ENCODE measurements at regions of chr10 and their contacts with region 1.

Region 1: GRCh38 chr10:43461950-43462349 is 25.0 kb downstream of the ZNF487 start:
- DNase-seq: peak; percentile 85
- ATAC-seq: peak; percentile 94
- H3K4me3 ChIP-seq: no peak overlapping the region
- H3K27ac ChIP-seq: no peak overlapping the region
- H3K4me1 ChIP-seq: no peaks in the 10 kb centered on the region
- H3K27me3 ChIP-seq: no peaks in the 10 kb centered on the region
- CTCF ChIP-seq: peak; percentile 76
- POLR2A ChIP-seq: no peak
- RAD21 ChIP-seq: peak; percentile 75

Region 2: GRCh38 chr10:42866115-42866995 is 595.6 kb before region 1 on chr10:
- CTCF ChIA-PET with region 1: no interaction called
- POLR2A ChIA-PET with region 1: no interaction called
- dilution Hi-C with region 1: no loop called
- in situ Hi-C with region 1: no loop called
- intact Hi-C with region 1: loop called (anchors 1 kb)
- DNase-seq: peak; percentile 64
- ATAC-seq: peak; percentile 100
- H3K4me3 ChIP-seq: peak overlapping the region; percentile 5; the same call in 1 of the 2 replicates
- H3K27ac ChIP-seq: no peak overlapping the region
- H3K4me1 ChIP-seq: no peaks in the 10 kb centered on the region
- H3K27me3 ChIP-seq: peaks cover 26% of the 10 kb centered on the region
- CTCF ChIP-seq: peak; percentile 74
- POLR2A ChIP-seq: no peak
- RAD21 ChIP-seq: peak; percentile 86

Region 3: DNA sequence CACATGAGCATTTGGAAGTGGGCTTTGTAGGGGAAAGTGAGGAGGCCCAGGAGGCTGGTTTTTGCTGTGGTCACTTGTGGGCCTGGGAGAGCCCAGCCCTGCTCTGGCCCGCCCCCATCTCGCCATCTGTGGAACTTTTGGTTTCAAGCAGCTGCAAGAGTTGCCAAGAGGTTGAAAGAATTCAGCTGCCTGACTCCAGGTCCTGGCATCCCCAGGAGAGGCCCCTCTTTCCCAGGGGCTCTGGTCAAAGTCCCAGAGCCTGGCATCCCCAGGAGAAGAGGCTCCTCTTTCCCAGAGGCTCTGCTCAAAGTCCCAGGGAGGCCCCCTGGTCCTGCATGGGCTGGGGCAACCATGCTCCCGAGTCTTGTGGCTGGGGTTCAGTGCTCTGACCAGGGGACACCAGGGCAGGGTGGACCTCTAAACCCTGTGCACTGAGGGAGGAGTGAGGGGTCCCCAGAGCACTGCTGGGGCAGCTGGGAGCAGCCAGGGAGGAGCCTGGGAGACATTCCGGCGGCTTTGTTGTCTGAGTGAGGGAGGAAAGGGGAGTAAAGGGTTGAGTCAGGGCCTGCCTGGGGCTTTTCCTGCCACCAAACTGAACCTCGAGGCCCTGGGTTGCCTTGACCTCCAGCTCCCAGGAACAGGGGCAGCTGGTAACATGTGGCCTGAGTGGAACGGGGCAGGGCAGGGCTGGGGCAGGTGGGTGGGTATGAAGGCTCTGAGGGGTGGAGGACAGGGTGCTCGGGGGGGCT is 351.4 kb before region 1 on chr10:
- CTCF ChIA-PET with region 1: no interaction called
- POLR2A ChIA-PET with region 1: no interaction called
- dilution Hi-C with region 1: no loop called
- in situ Hi-C with region 1: no loop called
- intact Hi-C with region 1: loop called (anchors 2 kb)
- DNase-seq: peak; percentile 57
- ATAC-seq: peak; percentile 61
- H3K4me3 ChIP-seq: no peak overlapping the region
- H3K27ac ChIP-seq: peak overlapping the region; percentile 36; the same call in 1 of the 2 replicates
- H3K4me1 ChIP-seq: peaks cover 10% of the 10 kb centered on the region
- H3K27me3 ChIP-seq: no peaks in the 10 kb centered on the region; the same call in 1 of the 2 replicates
- CTCF ChIP-seq: no peak
- POLR2A ChIP-seq: no peak
- RAD21 ChIP-seq: no peak

Region 4: DNA sequence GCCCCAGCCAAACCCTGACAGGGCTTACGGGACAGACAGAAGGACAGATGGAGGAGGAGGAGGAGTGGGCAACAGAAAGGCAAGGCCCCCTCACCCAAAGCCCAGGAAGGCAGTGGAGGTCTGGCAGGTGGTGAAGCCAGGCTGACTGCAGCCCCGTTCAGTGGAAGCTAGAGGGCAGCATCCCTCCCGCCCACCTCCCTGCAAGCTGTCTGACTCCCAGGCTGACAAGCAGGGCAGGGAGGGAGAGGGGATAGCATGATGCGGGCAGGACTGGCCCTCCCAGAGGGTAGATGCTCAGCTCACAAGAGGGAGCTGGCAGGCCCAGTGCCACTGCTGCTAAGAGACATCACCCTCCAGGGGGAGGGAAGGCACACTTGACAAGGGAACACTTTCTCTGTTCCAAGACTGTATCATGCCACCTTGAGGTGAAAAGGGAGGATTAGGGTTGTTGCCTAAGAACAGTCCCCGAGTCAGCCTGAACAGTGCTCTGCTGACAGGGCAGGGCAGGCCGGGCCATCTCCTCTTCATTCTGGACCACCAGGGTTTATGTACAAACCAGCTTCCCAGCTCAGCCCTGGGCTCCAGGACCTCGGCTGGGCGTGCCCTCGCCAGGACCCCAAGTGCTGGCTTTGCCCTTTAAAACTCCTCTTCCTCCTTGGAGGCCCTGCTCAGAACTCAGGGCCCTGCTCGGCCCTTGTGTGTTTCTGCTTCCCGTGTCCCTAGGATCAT is 256.8 kb before region 1 on chr10:
- CTCF ChIA-PET with region 1: interaction called, 4 read pairs
- POLR2A ChIA-PET with region 1: no interaction called
- dilution Hi-C with region 1: no loop called
- in situ Hi-C with region 1: no loop called
- intact Hi-C with region 1: loop called (anchors 5 kb)
- DNase-seq: peak; percentile 48
- ATAC-seq: peak; percentile 80
- H3K4me3 ChIP-seq: no peak overlapping the region
- H3K27ac ChIP-seq: no peak overlapping the region
- H3K4me1 ChIP-seq: no peaks in the 10 kb centered on the region; the same call in 1 of the 2 replicates
- H3K27me3 ChIP-seq: peaks cover 3% of the 10 kb centered on the region; the same call in 1 of the 2 replicates
- CTCF ChIP-seq: peak; percentile 63
- POLR2A ChIP-seq: no peak
- RAD21 ChIP-seq: peak; percentile 44

Region 5: GRCh38 chr10:43292755-43293676 is 168.9 kb before region 1 on chr10:
- CTCF ChIA-PET with region 1: interaction called, 3 read pairs
- POLR2A ChIA-PET with region 1: no interaction called
- dilution Hi-C with region 1: no loop called
- in situ Hi-C with region 1: loop called (anchors 5 kb)
- intact Hi-C with region 1: loop called (anchors 1 kb)
- DNase-seq: peak; percentile 41
- ATAC-seq: peak; percentile 87
- H3K4me3 ChIP-seq: no peak overlapping the region
- H3K27ac ChIP-seq: no peak overlapping the region
- H3K4me1 ChIP-seq: no peaks in the 10 kb centered on the region
- H3K27me3 ChIP-seq: peaks cover 8% of the 10 kb centered on the region
- CTCF ChIP-seq: peak; percentile 64
- POLR2A ChIP-seq: no peak
- RAD21 ChIP-seq: peak; percentile 56

Region 6: DNA sequence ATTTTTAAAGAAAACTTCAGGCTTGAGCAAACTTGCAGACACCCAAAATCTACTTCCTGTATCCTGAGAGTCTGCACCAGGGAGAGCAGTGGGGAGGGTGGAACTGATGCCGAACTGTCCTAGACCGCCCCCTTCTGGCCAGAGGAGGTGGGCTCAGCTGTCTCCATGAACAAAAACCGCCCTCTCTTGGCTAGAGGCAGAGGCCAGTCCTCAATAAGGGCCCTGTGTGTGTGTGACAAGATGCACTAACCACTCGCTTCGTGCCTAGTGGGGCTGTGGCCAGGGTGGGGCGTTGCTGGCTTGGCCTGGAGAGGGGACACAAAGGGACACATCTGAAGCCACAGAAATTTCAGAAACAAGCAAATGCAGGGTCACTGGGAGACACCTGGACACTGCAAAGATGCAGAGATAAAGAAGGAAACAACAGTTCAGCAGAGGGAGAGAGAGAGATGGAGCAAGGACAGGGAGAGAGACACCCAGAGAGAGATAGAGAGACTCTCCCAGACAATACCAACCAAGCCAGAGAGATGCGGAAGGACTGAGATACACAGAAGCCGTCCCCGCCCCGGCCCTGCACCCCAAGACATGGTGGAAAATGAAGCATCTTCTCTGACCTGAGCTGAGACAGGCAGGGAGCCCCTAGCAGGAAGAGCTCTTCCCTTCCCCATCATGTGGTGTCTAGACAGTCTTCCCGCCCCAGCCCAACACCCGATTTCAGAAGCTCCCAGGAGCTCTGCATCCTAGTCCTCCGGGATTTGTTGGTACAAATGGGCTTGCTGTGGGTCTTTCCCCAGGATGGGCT is 113.2 kb before region 1 on chr10:
- CTCF ChIA-PET with region 1: no interaction called
- POLR2A ChIA-PET with region 1: no interaction called
- dilution Hi-C with region 1: no loop called
- in situ Hi-C with region 1: no loop called
- intact Hi-C with region 1: loop called (anchors 2 kb)
- DNase-seq: peak; percentile 68
- ATAC-seq: peak; percentile 100
- H3K4me3 ChIP-seq: no peak overlapping the region
- H3K27ac ChIP-seq: no peak overlapping the region
- H3K4me1 ChIP-seq: no peaks in the 10 kb centered on the region
- H3K27me3 ChIP-seq: peaks cover 16% of the 10 kb centered on the region; the same call in 1 of the 2 replicates
- CTCF ChIP-seq: peak; percentile 92
- POLR2A ChIP-seq: no peak
- RAD21 ChIP-seq: peak; percentile 86

Region 7: GRCh38 chr10:43479275-43479674 is 17.3 kb after region 1 on chr10:
- CTCF ChIA-PET with region 1: no interaction called
- POLR2A ChIA-PET with region 1: interaction called, 12 read pairs
- dilution Hi-C with region 1: no loop called
- in situ Hi-C with region 1: no loop called
- intact Hi-C with region 1: no loop called
- DNase-seq: peak; percentile 41
- ATAC-seq: peak; percentile 46; the same call in 1 of the 2 replicates
- H3K4me3 ChIP-seq: no peak overlapping the region
- H3K27ac ChIP-seq: no peak overlapping the region
- H3K4me1 ChIP-seq: no peaks in the 10 kb centered on the region
- H3K27me3 ChIP-seq: no peaks in the 10 kb centered on the region
- CTCF ChIP-seq: no peak
- POLR2A ChIP-seq: no peak
- RAD21 ChIP-seq: no peak